K562 (cell line): ENCODE measurements at regions of chr3 and their contacts with region 1.

Region 1: DNA sequence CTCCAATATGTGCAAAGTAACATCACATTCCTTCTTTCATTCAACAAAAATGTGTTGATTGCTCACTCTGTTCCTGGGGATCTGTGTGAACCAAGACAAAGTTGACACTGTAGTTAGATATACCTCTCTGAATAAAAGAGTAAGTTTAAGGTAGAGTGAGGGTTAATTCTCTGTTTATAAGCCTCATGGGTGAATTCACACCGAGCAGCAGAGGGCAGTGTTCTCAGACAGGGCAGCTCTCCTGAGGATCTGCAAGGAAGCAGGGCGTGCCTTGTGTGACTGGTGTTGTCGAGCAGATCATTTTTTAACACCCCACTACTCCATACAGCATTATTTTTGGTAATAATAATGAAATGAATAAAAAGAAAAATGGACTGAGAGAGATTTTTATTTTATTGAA is 34.4 kb downstream of the PAQR9 start:
- DNase-seq: peak; percentile 69 to 87 (median 73)
- ATAC-seq: peak; percentile 97
- H3K4me3 ChIP-seq: no peak overlapping the region
- H3K27ac ChIP-seq: no peak overlapping the region
- H3K4me1 ChIP-seq: peaks cover 0 to 14% of the 10 kb centered on the region in 2 experiments; a peak in 4 of 5 replicates
- H3K27me3 ChIP-seq: no peaks in the 10 kb centered on the region
- CTCF ChIP-seq: peak; percentile 79 to 86 (median 85)
- EP300 ChIP-seq: no peak
- POLR2A ChIP-seq: no peak
- RAD21 ChIP-seq: peak; percentile 61 to 86

Region 2: GRCh38 chr3:142981108-142981507 is 52.0 kb after region 1 on chr3:
- CTCF ChIA-PET with region 1: no interaction called
- POLR2A ChIA-PET with region 1: interaction called, 4 read pairs
- in situ Hi-C with region 1: loop called (anchors 5 kb)
- intact Hi-C with region 1: no loop called
- DNase-seq: peak in 1 of 4 experiments; percentile 43
- ATAC-seq: 0 out of 3 replicates have a peak, but pooled peaks have one; percentile 8
- H3K4me3 ChIP-seq: no peak overlapping the region
- H3K27ac ChIP-seq: no peak overlapping the region
- H3K4me1 ChIP-seq: peaks cover 3 to 38% of the 10 kb centered on the region in 2 experiments; a peak in 3 of 5 replicates
- H3K27me3 ChIP-seq: no peaks in the 10 kb centered on the region
- CTCF ChIP-seq: peak in 1 of 3 experiments; percentile 30; a peak in 1 of 6 replicates
- EP300 ChIP-seq: no peak
- POLR2A ChIP-seq: no peak
- RAD21 ChIP-seq: peak; percentile 10 to 23; a peak in 2 of 4 replicates

Region 3: GRCh38 chr3:142987080-142987700 is 58.1 kb after region 1 on chr3:
- CTCF ChIA-PET with region 1: interaction called, 12 read pairs
- POLR2A ChIA-PET with region 1: no interaction called
- in situ Hi-C with region 1: loop called (anchors 5 kb)
- intact Hi-C with region 1: loop called (anchors 1 kb)
- DNase-seq: peak in 3 of 4 experiments; percentile 37 to 59 (median 47)
- ATAC-seq: peak; percentile 76
- H3K4me3 ChIP-seq: no peak overlapping the region
- H3K27ac ChIP-seq: no peak overlapping the region
- H3K4me1 ChIP-seq: peaks cover 0 to 19% of the 10 kb centered on the region in 2 experiments; a peak in 3 of 5 replicates
- H3K27me3 ChIP-seq: no peaks in the 10 kb centered on the region
- CTCF ChIP-seq: peak; percentile 50 to 77 (median 52); a peak in 4 of 6 replicates
- EP300 ChIP-seq: no peak
- POLR2A ChIP-seq: no peak
- RAD21 ChIP-seq: peak; percentile 73 to 83